Right cardiac atrium (tissue), 5 donors: ENCODE measurements at regions of chr15 and their contacts with region 1.

Region 1: DNA sequence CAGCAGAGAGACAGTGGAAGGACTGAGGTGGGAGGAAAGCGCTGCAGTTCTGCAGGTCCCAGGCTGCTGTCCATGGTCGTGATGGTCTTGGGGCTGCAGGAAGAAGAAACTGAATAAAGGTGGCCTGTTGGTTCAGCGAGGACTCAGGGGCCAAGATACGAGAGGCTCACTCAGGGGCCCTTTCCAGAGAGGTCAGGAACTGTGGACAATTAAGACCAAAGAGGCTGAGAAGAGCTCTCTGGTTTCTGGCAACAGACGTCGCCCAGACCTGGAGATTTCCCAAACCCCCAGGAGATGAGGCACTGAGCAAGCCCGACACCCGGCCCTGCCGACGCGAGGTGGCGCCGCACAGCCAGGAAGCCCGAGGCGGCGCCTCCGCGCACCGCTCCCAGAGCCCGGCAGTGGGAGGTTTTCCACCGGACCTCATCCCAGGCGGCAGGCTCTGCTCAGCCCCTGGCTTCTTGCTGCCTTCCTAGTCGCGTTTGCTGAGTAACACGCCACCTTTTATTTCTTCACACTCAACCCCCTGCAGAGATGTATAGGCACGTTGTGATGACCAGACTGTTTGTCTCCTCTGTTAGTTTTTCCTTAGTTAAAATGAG is 56.4 kb upstream of the ARRDC4 start:
- DNase-seq: peak; percentile 75 to 91 (median 88)
- ATAC-seq: peak; percentile 90 to 96
- H3K4me3 ChIP-seq: no peak overlapping the region
- H3K27ac ChIP-seq: no peak overlapping the region
- H3K4me1 ChIP-seq: no peaks in the 10 kb centered on the region
- H3K27me3 ChIP-seq: no peaks in the 10 kb centered on the region

Region 2: GRCh38 chr15:97978401-97979139 is 74.5 kb after region 1 on chr15:
- intact Hi-C with region 1: no loop called
- DNase-seq: no peak
- ATAC-seq: peak; percentile 31 to 76
- H3K4me3 ChIP-seq: no peak overlapping the region
- H3K27ac ChIP-seq: no peak overlapping the region
- H3K4me1 ChIP-seq: no peaks in the 10 kb centered on the region
- H3K27me3 ChIP-seq: no peaks in the 10 kb centered on the region

Region 3: DNA sequence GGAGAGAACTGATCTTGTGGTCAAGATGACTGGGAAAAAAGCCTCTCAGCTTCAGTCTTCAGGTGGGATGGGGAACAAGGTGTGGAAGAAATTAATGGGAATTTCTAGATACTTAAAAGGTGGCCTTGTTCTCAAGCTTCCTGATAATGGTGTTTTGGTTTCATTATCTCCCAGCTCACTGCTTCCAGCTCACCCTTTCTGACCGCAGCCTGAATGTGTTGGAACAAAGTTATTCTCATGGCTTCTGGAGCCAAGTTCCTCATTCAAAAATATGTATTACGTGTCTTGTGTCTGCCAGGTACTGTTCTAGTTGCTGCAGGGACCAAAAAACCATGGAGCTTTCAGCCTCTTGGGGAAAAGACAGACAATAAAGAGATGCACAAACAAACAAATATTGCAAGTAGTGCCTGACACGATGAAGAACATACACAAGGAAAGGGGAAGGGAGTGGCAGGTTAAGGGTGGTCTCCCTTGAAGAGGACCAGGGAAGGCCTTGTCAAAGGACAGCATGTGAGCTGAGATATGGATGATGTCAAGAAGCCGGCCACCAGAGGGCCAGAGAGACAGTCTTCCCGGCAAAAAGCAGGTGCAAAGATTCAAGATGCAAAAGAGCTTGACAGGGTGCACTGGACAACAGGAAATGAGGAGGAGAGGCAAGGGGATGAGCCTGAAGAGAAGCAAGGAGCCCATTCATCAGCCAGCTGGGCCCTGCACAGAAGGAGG is 92.0 kb after region 1 on chr15:
- intact Hi-C with region 1: no loop called
- DNase-seq: no peak
- ATAC-seq: no peak
- H3K4me3 ChIP-seq: no peak overlapping the region
- H3K27ac ChIP-seq: no peak overlapping the region
- H3K4me1 ChIP-seq: peaks cover 2% of the 10 kb centered on the region
- H3K27me3 ChIP-seq: no peaks in the 10 kb centered on the region

Region 4: DNA sequence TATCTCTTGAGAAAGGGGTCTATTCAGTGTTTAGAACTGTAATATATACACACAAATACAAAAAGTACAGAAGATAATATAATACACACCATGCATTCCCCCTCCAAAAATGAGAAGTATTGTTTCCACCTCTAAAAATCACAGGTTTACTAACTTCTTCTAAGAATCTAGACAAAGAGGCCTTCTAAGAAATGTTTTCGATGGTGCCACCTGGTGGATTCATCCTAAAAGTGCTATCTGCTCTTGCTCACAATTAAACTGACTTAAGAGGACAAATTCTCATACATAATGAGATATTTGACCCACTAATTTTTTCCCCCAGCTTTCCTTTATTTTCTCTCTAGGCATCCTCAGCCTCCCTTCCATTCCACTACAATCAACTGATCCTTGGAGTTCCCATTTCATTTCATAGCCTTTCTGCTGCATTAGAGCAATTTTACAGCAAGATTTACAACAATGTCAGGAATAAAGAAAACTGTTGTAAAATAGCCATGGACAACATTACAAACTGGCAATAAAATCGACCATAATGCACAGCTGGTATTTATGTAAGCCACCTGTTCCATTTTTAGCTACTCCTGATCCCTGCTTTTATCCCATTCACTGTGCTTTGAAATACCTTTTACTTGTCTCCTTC is 181.0 kb after region 1 on chr15:
- intact Hi-C with region 1: loop called (anchors 2 to 5 kb)
- DNase-seq: no peak
- ATAC-seq: no peak
- H3K4me3 ChIP-seq: no peak overlapping the region
- H3K27ac ChIP-seq: no peak overlapping the region
- H3K4me1 ChIP-seq: no peaks in the 10 kb centered on the region
- H3K27me3 ChIP-seq: no peaks in the 10 kb centered on the region

Region 5: DNA sequence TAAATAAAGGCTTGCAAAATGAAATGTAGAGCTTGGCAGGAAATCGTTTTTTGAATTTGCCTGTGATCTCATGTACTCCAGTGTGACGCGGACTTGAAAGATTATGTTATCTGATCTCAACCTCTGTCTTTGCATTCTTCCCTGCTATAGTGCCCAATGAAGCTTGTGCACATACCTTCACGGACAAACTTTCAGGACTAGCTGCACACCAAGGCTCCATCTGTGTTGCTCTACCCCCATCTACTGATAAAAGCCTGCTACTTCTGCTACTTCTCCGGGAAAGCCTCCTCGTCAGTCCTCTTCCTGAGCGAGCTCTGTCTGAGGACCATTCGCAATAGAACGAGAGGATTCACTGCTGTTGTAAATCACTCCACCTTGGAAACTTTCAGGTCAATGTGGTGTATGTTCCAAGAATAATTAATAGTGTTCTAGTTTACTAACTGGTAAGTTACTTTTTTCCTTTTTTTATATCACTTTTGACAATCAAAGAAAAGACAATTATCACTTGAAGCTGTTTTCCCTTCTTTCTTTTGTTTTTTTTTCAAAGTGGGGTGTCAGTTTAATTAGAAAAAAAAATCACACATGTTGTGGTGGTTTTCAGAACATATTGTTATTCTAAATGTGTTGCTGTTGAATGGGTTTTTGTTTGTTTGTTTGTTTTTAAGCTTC is 274.0 kb after region 1 on chr15:
- intact Hi-C with region 1: loop called in 3 of 4 experiments (anchors 5 kb)
- DNase-seq: no peak
- ATAC-seq: peak; percentile 73 to 81
- H3K4me3 ChIP-seq: no peak overlapping the region
- H3K27ac ChIP-seq: no peak overlapping the region
- H3K4me1 ChIP-seq: no peaks in the 10 kb centered on the region
- H3K27me3 ChIP-seq: no peaks in the 10 kb centered on the region